HepG2 (cell line): ENCODE measurements at regions of chr15 and their contacts with region 1.

Region 1: DNA sequence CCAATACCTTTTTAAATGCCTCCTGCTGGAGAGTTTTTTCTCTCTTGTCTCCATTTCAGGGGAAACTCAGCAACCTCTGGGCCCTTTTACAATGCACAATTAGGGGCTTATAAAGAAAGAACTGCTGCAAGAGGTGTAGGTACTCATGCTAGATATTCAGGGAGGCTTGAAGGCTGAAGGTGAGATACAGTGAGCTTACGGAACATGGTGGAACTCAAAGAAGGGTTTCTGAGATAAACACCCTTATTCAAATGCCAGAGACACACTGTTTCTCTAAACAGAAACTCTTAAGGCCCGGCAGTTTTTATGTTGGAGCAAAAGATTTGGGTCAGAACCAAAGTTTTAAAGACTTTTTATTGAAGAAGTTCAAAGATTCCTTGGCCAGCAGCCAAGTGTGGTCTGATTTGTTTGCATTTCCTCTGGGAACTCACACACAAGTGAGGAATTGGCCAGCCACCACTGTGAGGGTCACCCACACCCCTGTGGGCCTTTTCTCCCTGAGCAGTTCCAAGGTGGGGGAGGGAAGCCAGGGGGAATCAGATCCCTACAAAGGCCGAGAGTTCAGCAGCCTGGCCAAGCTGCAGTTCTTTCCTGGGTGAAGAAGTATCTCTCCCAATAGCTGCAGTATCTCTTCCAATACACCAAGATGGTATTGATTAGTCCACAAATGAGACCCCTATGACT is 47.8 kb downstream of the TNFAIP8L3 start:
- DNase-seq: peak; percentile 78
- ATAC-seq: peak; percentile 96
- H3K4me3 ChIP-seq: peak overlapping the region in 1 of 3 experiments; percentile 27; a peak in 1 of 6 replicates
- H3K27ac ChIP-seq: peak overlapping the region; percentile 60
- H3K4me1 ChIP-seq: peaks cover 36% of the 10 kb centered on the region
- H3K27me3 ChIP-seq: no peaks in the 10 kb centered on the region
- CTCF ChIP-seq: no peak
- EP300 ChIP-seq: peak in 1 of 2 experiments; percentile 33; a peak in 1 of 4 replicates
- POLR2A ChIP-seq: no peak
- RAD21 ChIP-seq: no peak

Region 2: GRCh38 chr15:50908210-50909009 is 138.5 kb before region 1 on chr15 and contains the start of gene AP4E1:
- CTCF ChIA-PET with region 1: no interaction called
- POLR2A ChIA-PET with region 1: no interaction called
- in situ Hi-C with region 1: no loop called
- intact Hi-C with region 1: no loop called
- DNase-seq: peak; percentile 85
- ATAC-seq: peak; percentile 81
- H3K4me3 ChIP-seq: peak within 1 kb of the TSS; percentile 85 to 99 (median 97)
- H3K27ac ChIP-seq: peak within 1 kb of the TSS; percentile 87
- H3K4me1 ChIP-seq: peaks cover 13% of the 10 kb centered on the region
- H3K27me3 ChIP-seq: no peaks in the 10 kb centered on the region; a peak in 1 of 5 replicates
- CTCF ChIP-seq: peak; percentile 94
- EP300 ChIP-seq: peak; percentile 38 to 53; a peak in 2 of 4 replicates
- POLR2A ChIP-seq: peak; percentile 72 to 84
- RAD21 ChIP-seq: peak; percentile 87
- total RNA-seq, gene AP4E1: 7.8 and 11.8 TPM in 2 replicates

Region 3: DNA sequence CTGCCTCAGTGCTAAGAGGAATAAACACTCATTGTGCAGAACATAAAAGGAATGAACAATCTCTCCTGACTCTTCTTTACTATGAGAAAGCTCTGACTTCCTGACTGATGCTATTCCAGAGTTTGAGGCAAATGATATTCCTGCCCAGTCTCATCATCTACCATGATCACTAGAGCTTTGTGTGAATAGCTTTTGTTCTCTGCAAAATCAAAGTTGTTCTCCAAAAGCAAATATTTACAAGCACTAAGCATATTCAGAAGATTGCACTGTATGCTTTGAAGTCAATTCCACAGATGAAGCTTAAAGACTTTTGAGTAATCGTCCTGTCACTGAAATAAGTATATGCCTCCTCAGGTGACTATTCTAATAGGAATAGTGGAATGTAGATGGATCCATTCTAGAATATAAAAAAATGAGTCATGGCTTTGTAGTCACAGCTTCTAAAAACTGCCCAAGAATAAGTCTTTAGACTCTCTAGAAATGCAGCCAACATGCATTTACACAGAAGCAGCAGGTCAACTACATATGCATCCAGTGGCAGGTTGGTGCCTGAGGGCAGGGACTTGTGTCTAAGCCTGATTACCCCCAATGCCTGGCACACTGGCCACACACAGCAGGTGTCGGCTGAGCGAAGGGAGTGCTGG is 13.2 kb after region 1 on chr15:
- CTCF ChIA-PET with region 1: no interaction called
- POLR2A ChIA-PET with region 1: interaction called, 3 read pairs
- in situ Hi-C with region 1: no loop called
- intact Hi-C with region 1: loop called (anchors 1 kb)
- DNase-seq: peak; percentile 95
- ATAC-seq: peak; percentile 91
- H3K4me3 ChIP-seq: no peak overlapping the region
- H3K27ac ChIP-seq: peak overlapping the region; percentile 19
- H3K4me1 ChIP-seq: peaks cover 24% of the 10 kb centered on the region
- H3K27me3 ChIP-seq: no peaks in the 10 kb centered on the region
- CTCF ChIP-seq: no peak
- EP300 ChIP-seq: peak in 1 of 2 experiments; percentile 77; a peak in 3 of 4 replicates
- POLR2A ChIP-seq: no peak
- RAD21 ChIP-seq: no peak

Region 4: DNA sequence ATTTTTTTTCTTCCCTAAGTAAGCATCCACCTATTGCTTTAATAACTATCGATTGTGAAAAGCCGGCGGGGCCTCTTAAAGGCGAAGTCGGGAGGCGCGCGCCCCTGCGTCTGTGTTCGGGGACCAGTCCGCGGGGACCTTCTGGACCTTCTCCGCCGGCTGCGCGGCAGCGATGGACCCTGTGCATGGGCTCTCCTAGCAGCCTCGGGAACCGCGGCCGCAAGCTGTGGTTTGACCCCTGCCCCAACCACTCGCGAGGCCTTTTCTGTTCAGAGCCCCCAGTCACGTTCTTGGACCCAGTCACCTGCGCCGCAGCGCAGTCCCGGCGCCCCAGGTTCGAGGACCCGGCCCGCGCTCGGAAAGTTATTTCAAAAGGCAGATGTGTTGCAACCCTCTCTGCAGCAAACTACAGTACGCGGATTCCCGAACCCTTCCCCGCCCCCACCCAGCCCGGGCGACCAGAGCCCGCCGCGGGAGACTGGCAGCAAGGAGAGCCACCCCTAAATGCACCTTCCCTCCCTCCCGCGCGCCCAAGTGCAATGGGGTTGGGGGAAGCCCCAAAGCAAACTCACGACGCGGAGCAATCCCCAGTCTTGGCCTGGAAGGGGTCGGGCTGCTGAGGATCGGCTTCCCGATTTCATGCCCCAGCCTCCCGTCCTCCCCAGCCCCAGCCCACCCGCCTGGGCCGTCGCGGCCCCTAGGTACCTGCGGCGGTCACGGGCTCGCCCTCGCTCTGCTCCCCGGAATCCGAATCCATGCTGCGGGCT is 47.1 kb after region 1 on chr15:
- CTCF ChIA-PET with region 1: no interaction called
- POLR2A ChIA-PET with region 1: no interaction called
- in situ Hi-C with region 1: no loop called
- intact Hi-C with region 1: loop called (anchors 5 kb)
- DNase-seq: peak; percentile 40
- ATAC-seq: peak; percentile 69
- H3K4me3 ChIP-seq: peak overlapping the region; percentile 62 to 79 (median 77)
- H3K27ac ChIP-seq: no peak overlapping the region
- H3K4me1 ChIP-seq: peaks cover 43% of the 10 kb centered on the region
- H3K27me3 ChIP-seq: no peaks in the 10 kb centered on the region
- CTCF ChIP-seq: no peak
- EP300 ChIP-seq: no peak
- POLR2A ChIP-seq: no peak
- RAD21 ChIP-seq: no peak